CD4-positive, alpha-beta memory T cell (primary cell): ENCODE measurements at regions of chr1 and their contacts with region 1.

Region 1: DNA sequence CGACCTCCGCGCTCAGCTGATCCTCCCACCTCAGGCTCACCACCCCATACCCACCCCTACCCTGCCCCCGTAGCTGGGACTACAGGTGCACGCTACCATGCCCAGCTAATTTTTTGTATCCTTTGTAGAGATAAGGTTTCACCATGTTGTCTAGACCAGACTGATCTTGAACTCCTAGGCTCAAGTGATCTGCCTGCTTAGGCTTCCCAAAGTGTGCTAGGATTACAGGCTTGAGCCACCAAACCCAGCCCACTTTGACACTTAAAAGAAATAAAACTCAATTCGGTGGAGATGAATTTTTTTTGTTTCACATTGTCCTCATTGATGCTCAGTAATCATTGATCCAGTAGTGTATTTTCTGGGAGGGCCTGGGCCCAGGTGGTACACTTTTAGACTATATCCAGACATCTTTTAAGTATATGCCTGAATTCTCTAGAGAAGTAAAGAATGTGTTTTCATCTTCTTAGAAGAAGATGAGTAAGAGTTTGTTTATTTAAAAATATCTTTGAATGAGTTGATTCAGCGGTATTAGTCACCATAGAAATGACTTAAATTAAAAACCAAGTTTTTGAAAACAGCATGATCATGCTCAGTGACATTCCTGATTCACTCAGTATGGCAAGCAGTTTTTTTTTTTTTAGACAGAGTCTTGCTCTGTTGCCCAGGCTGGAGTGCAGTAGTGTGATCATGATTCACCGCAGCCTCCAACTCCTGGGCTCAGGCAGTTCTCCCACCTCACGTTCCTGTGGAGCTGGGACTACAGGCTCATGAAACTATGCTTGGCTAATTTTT is 57.8 kb downstream of the EPB41 start:
- DNase-seq: no peak
- H3K4me3 ChIP-seq: no peak overlapping the region
- H3K4me3 Mint-ChIP-seq: peak overlapping the region in 7 of 8 donors; percentile 26 to 81 (median 56)
- H3K27ac ChIP-seq: no peak overlapping the region
- H3K27ac Mint-ChIP-seq: peak overlapping the region in 6 of 7 donors; percentile 23 to 90 (median 60)
- H3K4me1 ChIP-seq: peaks cover 50% of the 10 kb centered on the region
- H3K4me1 Mint-ChIP-seq: peaks cover 46 to 76% (median 57%) of the 10 kb centered on the region in 4 donors
- H3K27me3 ChIP-seq: no peaks in the 10 kb centered on the region
- H3K27me3 Mint-ChIP-seq: no peaks in the 10 kb centered on the region

Region 2: DNA sequence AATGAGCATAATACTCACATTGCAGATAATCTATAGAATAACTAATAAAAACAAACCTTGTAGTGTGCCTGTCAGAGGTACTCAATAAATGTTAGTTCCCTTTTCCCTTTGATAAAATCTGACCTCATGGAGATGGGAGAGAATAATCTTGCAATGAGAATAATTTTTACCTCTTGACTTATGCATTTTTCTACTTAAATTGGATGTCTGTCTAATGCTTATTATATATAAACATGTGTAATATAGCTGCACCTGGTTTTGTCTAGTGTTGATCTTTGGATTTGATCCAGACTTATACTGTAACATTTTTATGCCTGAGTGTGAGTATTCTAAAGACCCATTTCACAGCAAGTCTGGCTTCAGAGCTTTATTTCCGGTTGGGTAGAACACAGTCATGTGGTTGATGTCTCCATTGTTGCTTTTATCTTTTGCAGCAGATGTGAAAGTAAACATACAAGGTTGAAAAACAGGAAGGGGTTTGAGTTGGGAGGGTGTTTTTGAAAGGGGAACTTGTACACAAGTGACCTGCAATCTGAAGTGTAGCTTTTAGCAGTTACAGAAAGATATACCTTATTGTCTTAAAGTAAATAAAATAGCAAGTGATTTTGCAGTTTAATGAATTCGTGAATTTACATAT is 45.4 kb before region 1 on chr1:
- CTCF ChIA-PET with region 1: interaction called, 4 read pairs
- POLR2A ChIA-PET with region 1: interaction called, 3 read pairs
- intact Hi-C with region 1: loop called (anchors 5 kb)
- DNase-seq: peak; percentile 77 to 85 (median 82)
- H3K4me3 ChIP-seq: peak overlapping the region; percentile 0 to 21
- H3K4me3 Mint-ChIP-seq: peak overlapping the region; percentile 56 to 84 (median 76)
- H3K27ac ChIP-seq: peak overlapping the region; percentile 67
- H3K27ac Mint-ChIP-seq: peak overlapping the region; percentile 72 to 97 (median 85)
- H3K4me1 ChIP-seq: peaks cover 93% of the 10 kb centered on the region
- H3K4me1 Mint-ChIP-seq: peaks cover 38 to 71% (median 54%) of the 10 kb centered on the region in 4 donors
- H3K27me3 ChIP-seq: no peaks in the 10 kb centered on the region
- H3K27me3 Mint-ChIP-seq: no peaks in the 10 kb centered on the region

Region 3: GRCh38 chr1:29341936-29342335 is 369.8 kb after region 1 on chr1:
- CTCF ChIA-PET with region 1: no interaction called
- POLR2A ChIA-PET with region 1: no interaction called
- intact Hi-C with region 1: no loop called
- DNase-seq: no peak
- H3K4me3 ChIP-seq: no peak overlapping the region
- H3K4me3 Mint-ChIP-seq: no peak overlapping the region
- H3K27ac ChIP-seq: no peak overlapping the region
- H3K27ac Mint-ChIP-seq: no peak overlapping the region
- H3K4me1 ChIP-seq: no peaks in the 10 kb centered on the region
- H3K4me1 Mint-ChIP-seq: no peaks in the 10 kb centered on the region
- H3K27me3 ChIP-seq: peaks cover 3% of the 10 kb centered on the region
- H3K27me3 Mint-ChIP-seq: peaks cover 23 to 45% of the 10 kb centered on the region in 2 donors

Region 4: DNA sequence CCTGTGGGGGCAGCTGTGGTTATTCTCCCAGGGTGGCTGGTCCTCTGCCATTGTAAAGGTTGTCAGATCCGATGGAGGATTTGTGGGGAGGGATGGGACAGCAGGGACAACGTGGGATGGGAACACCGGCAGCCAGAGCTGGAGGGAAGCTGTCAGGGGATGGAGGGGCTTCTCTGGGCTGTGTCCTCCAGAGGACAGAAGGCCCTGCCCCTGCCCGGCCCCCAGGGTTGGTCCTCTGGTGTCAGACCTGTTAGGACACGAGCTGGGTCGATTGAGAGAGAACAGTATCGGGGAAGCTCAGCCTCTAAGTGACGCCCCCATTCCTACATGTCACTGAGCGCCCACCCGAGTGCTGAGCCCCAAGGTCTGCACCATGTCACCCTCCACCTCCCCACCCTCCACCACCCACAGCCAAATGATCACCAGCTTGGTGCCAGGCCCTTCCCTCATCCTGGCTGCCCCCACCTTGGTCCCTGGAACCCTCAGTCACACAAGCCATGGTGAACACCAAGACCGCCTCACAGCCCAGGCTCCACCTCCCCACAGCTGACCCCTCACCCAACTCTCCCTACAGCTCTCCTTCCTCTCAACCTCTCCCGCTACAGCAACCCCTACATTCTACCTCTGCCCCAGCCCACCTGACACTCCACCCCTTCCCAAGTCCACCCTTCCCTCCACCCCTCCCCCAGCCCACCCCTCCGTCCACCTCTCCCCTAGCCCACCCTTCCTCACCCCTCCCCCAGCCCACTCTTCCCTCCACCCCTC is 1506.8 kb after region 1 on chr1:
- CTCF ChIA-PET with region 1: no interaction called
- POLR2A ChIA-PET with region 1: no interaction called
- intact Hi-C with region 1: no loop called
- DNase-seq: no peak
- H3K4me3 ChIP-seq: no peak overlapping the region
- H3K4me3 Mint-ChIP-seq: no peak overlapping the region
- H3K27ac ChIP-seq: no peak overlapping the region
- H3K27ac Mint-ChIP-seq: no peak overlapping the region
- H3K4me1 ChIP-seq: no peaks in the 10 kb centered on the region
- H3K4me1 Mint-ChIP-seq: peaks cover 0 to 2% (median 0%) of the 10 kb centered on the region in 4 donors
- H3K27me3 ChIP-seq: no peaks in the 10 kb centered on the region
- H3K27me3 Mint-ChIP-seq: peaks cover 11 to 15% of the 10 kb centered on the region in 2 donors